AG04449 (cell line): ENCODE measurements at regions of chr4 and their contacts with region 1.

Region 1: DNA sequence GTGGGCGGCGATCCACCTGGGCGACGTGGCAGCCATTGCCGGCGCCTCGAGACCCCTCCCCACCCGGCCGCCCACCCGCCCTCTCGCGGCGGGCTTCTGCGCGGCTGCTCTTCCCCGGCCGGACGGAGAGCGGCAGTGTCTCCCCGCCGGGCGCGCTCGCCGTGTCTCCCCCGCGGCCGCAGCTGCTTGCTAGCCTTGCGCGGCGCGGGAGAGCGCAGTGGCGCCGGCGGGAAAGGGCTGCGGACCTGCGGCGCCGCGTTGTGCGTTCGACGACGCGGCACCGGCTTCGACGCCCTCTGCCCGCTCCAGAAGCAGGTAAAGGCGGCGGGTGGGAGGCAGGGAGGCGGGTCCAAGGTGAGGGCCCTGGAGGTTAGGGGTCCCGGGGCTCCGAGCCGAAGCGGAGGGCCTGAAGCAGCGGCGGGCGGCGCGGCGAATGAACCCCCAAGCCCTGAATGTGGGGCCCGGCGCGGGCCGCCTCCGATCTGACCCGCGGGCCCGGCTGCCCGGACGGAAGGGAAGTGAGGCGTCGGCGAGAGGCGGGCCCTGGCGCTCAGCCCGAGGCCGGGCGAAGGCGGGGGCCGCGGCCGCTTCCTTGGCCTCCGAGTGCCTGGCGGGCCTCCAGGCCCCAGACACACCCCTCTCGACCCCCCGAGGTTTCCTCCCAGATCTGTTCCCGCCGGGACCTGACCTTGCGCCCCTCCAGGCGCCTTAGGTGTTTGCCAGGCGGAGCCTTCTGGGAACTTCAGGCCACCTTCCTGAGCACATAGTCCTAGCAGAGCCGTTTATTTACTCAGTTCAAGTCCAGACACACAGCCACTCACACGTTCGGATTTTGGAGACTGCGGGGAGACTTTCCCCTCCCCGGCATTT is at the start of gene N4BP2:
- DNase-seq: no peak
- H3K4me3 ChIP-seq: peak within 1 kb of the TSS; percentile 80
- CTCF ChIP-seq: peak; percentile 88

Region 2: DNA sequence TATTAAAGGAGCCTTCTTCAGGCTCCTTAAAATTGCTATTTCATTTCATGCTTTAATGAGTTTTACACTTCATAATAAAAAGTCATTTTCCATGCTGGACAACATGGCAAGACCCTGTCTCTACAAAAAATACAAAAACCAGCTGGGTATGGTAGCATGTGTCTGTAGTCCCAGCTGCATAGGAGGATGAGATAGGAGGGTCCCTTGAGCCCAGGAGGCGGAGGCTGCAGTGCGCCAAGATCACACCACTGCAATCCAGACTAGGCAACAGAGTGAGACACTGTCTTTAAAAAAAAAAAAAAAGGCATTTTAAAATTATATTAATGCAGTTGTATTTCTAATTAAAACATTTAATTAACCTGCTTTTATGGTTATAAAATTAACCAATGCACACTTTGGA is 128.4 kb before region 1 on chr4:
- CTCF ChIA-PET with region 1: no interaction called
- POLR2A ChIA-PET with region 1: no interaction called
- DNase-seq: no peak
- H3K4me3 ChIP-seq: no peak overlapping the region
- CTCF ChIP-seq: no peak

Region 3: DNA sequence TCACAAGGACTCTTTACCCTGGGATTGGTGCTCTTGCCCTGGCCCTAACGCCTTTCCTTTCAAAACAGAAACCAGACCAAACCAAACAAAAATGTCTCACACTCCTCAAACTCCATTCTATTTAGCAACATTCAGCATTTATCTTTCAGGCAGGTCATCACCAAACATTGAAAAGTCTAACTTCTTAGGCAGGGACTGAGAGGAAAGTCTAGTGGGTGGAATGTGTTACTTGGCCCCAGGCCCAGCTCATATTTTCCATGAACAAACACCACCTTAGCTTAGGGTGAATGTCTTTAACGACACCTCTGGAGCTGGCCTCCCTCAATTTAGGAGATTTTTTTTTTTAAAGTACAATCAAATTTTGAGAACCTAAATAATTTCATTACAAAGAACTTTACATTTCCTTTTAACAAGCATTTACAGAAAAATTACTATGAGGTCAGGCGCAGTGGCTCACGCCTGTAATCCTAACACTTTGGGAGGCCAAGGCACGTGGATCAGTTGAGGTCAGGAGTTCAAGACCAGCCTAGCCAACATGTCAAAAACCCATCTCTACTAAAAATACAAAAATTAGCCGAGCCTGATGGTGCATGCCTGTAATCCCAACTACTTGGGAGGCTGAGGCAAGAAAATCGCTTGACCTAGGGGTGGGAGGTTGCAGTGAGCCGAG is 10.5 kb before region 1 on chr4:
- CTCF ChIA-PET with region 1: interaction called, 11 read pairs
- POLR2A ChIA-PET with region 1: no interaction called
- DNase-seq: peak; percentile 40
- H3K4me3 ChIP-seq: no peak overlapping the region
- CTCF ChIP-seq: no peak